HepG2 (cell line): ENCODE measurements at regions of chr14 and their contacts with region 1.

Region 1: DNA sequence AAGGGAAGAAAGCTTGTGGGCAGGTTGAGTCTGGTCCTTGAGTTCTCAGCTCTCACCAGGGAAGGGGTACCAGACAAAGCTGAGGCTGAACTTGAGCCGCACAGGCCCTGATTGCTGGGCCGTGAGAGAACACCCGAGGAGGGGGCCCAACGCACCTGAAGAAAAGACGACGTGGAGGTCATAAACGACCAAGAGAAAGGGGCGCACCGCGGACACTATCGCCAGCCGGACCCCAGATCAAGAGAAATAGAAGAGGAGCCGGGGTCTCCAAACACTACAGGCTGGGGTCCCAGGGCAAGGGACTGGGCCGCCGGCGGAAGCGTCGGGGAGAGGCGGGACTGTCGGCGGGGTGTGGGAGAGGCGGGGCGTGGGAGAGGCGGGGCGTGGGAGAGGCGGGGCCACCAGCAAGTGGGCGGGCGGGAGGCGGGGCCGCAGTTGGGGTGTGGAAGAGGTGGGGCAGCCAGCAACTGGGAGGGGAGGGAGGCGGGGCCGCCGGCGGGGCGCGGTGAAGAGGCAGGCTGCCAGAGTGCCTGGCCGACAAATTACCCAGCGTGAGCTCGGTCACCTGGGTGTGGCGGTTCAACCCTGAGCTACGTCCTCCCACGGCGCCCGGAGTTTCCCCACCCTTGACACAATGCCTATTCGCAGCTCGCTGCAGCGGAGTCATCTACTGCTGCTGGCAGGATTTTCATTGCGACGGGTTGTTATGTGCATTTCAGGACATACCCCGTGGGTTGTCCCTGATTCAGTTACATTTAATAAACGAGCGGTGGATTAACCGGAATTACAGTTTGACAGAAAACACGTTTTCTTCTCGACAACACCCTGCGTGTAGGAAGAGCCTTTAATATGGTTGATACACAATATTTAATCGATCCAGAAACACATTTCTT is 15.5 kb upstream of the NEMF start:
- DNase-seq: peak; percentile 82
- ATAC-seq: peak; percentile 96
- H3K4me3 ChIP-seq: peak overlapping the region; percentile 79 to 89 (median 84)
- H3K27ac ChIP-seq: peak overlapping the region; percentile 61
- H3K4me1 ChIP-seq: peaks cover 28% of the 10 kb centered on the region
- H3K27me3 ChIP-seq: no peaks in the 10 kb centered on the region; a peak in 1 of 5 replicates
- CTCF ChIP-seq: no peak
- EP300 ChIP-seq: no peak
- POLR2A ChIP-seq: peak; percentile 55 to 66
- RAD21 ChIP-seq: no peak

Region 2: GRCh38 chr14:50103558-50103957 is 235.5 kb after region 1 on chr14:
- CTCF ChIA-PET with region 1: interaction called, 29 read pairs
- POLR2A ChIA-PET with region 1: interaction called, 4 read pairs
- in situ Hi-C with region 1: no loop called
- intact Hi-C with region 1: loop called (anchors 1 kb)
- DNase-seq: no peak
- ATAC-seq: no peak
- H3K4me3 ChIP-seq: no peak overlapping the region
- H3K27ac ChIP-seq: no peak overlapping the region
- H3K4me1 ChIP-seq: peaks cover 25% of the 10 kb centered on the region
- H3K27me3 ChIP-seq: no peaks in the 10 kb centered on the region
- CTCF ChIP-seq: no peak
- EP300 ChIP-seq: no peak
- POLR2A ChIP-seq: no peak
- RAD21 ChIP-seq: no peak

Region 3: DNA sequence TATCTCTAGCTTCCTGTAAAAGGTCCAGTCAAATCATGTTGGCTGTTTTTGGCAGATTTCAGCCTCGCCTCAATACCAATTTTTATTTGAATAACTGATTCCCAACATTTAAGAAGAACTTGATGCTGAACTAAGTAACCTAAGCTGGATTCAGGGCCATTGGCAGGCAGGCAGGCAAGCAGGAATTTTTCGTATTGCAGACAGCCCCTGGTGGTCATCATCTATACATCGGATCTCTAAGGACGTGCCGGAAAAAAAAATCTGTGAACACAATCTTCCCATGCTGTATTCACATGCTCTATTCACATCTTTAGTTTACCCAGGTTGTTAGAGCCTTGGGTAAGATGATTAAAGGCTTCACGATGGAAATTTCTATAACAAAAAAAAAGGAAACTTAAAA is 241.3 kb after region 1 on chr14:
- CTCF ChIA-PET with region 1: interaction called, 29 read pairs
- POLR2A ChIA-PET with region 1: interaction called, 4 read pairs
- in situ Hi-C with region 1: loop called (anchors 5 kb)
- intact Hi-C with region 1: loop called (anchors 1 kb)
- DNase-seq: peak; percentile 23
- ATAC-seq: peak; percentile 65
- H3K4me3 ChIP-seq: no peak overlapping the region
- H3K27ac ChIP-seq: no peak overlapping the region
- H3K4me1 ChIP-seq: peaks cover 1% of the 10 kb centered on the region
- H3K27me3 ChIP-seq: no peaks in the 10 kb centered on the region
- CTCF ChIP-seq: no peak
- EP300 ChIP-seq: no peak
- POLR2A ChIP-seq: no peak
- RAD21 ChIP-seq: no peak

Region 4: DNA sequence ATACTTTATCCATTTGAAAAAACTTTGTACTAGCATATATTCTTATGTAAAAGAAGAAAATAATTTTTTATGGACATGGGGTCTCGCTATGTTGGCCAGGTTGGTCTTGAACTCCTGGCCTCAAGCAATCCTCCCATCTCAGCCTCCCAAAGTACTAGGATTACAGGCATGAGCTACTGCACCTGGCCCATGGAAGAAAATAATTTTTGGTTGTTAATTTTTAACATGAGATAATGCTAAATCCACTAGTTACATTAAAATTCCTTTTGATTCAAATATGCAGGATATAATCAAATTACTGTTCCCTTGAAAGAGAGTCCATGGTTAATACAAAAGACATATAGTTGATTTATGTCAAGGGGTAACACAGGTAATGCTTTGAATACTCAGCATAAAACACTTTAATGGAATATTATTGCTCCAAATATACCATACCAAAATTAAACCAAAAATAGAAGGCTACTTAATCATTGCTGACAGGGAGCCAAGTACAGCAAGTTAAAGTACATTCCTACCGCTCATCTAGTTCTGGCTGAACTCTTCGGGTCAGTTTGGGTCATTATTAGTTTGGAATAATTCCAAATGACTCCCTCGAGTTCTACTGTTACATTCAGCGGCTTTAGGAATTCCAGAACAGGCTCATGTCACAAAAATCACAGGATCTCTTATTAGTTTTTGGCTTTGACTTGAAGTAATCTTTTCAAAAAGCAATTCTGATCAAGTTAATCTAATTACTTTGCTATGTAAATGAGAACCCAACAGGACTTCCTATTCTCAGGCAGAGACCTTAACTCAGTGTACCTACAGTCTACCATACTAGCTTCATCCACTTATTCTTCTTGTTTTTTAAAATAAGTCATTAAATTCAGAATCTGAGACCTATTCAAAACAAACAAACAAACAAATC is 357.2 kb after region 1 on chr14:
- CTCF ChIA-PET with region 1: no interaction called
- POLR2A ChIA-PET with region 1: no interaction called
- in situ Hi-C with region 1: loop called (anchors 25 kb)
- intact Hi-C with region 1: loop called (anchors 10 kb)
- DNase-seq: peak; percentile 16
- ATAC-seq: peak; percentile 53
- H3K4me3 ChIP-seq: no peak overlapping the region
- H3K27ac ChIP-seq: peak overlapping the region; percentile 10
- H3K4me1 ChIP-seq: peaks cover 49% of the 10 kb centered on the region
- H3K27me3 ChIP-seq: no peaks in the 10 kb centered on the region
- CTCF ChIP-seq: no peak
- EP300 ChIP-seq: no peak
- POLR2A ChIP-seq: no peak
- RAD21 ChIP-seq: no peak